Gastrocnemius medialis (tissue), 4 donors: ENCODE measurements at regions of chr3 and their contacts with region 1.

Region 1: DNA sequence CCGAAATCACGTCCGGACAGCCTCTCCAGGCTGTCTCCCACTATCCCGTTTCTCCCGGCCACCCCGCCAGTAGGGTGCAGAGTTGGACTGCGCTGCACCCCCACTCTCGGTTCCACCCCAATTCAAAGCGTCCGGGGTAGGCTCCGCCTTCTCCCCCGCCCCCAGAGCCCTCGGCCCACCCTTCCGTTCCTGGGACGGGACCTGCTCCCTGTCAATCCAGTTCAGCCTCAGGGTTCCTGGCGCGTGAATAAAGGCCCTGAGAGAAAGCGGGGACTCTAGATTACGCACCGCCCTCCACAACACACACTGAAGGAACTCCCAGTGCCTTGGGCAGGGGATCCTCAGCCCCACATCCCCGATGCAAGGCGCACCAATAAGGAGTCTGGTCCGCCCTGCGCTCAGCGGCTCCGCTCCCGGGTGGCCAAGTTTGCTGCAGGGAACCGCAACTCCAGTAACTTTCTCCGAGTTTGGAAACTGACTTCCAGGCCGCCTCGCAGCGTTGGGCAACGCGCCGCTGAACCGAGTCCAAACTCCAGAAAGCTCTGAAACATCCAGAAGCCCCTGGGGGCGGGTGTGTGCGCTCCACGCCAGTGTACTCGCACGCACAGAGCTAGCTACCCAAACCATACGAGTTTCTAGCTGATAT is 1.9 kb downstream of the ADAMTS9 start:
- DNase-seq: peak; percentile 84 to 92
- ATAC-seq: peak; percentile 76 to 78
- H3K4me3 ChIP-seq: peak overlapping the region; percentile 56 to 95 (median 88)
- H3K27ac ChIP-seq: peak overlapping the region; percentile 90 to 97 (median 93)
- H3K4me1 ChIP-seq: peaks cover 0 to 15% of the 10 kb centered on the region in 2 donors
- H3K27me3 ChIP-seq: no peaks in the 10 kb centered on the region
- CTCF ChIP-seq: peak in 3 of 5 experiments; percentile 49 to 62 (median 52)
- POLR2A ChIP-seq: peak; percentile 80 to 91

Region 2: DNA sequence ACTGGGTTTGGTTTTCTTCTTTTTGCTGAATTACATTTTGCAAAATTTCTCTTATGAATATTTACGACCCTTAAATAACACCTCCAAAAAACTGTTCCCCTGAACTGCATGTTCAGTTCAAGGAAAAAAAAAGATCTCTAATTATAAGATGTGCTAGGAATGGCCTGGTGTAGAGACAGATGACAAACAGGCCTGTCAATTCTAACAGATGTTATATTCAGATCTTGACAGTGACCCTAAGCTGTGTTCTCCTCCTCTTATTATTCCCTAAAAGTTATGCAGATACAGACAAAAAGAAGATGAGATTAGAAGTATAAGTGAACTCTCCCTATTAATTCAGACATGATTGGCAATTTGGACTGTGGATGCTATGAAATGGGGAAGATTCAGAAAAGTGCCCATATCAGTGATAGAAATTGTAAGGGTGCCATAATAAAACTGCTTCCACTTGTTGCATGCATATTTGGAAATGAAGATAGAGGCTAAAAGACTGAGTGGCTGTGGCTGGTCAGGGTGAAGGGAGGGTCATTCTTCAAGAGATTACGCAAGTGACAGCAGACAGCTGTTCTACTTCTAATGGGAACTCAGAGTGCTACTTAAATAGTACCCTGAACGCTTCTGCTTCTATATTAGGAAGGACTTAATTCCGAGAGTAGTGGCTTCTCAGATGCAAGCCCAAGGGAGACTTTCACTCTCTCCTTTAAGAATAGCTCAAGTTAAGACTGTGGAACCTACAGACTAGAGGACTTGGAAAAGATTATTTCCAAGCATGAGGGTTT is 73.7 kb before region 1 on chr3:
- in situ Hi-C with region 1: no loop called
- intact Hi-C with region 1: loop called (anchors 2 kb)
- DNase-seq: peak; percentile 75 to 76
- ATAC-seq: peak; percentile 98 to 99
- H3K4me3 ChIP-seq: peak overlapping the region; percentile 33 to 41 (median 35)
- H3K27ac ChIP-seq: peak overlapping the region; percentile 82 to 92 (median 88)
- H3K4me1 ChIP-seq: peaks cover 51 to 68% of the 10 kb centered on the region in 2 donors
- H3K27me3 ChIP-seq: no peaks in the 10 kb centered on the region
- CTCF ChIP-seq: no peak
- POLR2A ChIP-seq: peak; percentile 12 to 56

Region 3: GRCh38 chr3:64763980-64764379 is 78.1 kb after region 1 on chr3:
- in situ Hi-C with region 1: no loop called
- intact Hi-C with region 1: loop called (anchors 5 kb)
- DNase-seq: no peak
- ATAC-seq: no peak
- H3K4me3 ChIP-seq: no peak overlapping the region
- H3K27ac ChIP-seq: peak overlapping the region in 1 of 4 donors; percentile 31
- H3K4me1 ChIP-seq: peaks cover 19 to 25% of the 10 kb centered on the region in 2 donors
- H3K27me3 ChIP-seq: no peaks in the 10 kb centered on the region
- CTCF ChIP-seq: peak in 1 of 5 experiments; percentile 16
- POLR2A ChIP-seq: no peak

Region 4: GRCh38 chr3:64903006-64903405 is 217.1 kb after region 1 on chr3:
- in situ Hi-C with region 1: no loop called
- intact Hi-C with region 1: loop called (anchors 5 kb)
- DNase-seq: no peak
- ATAC-seq: no peak
- H3K4me3 ChIP-seq: no peak overlapping the region
- H3K27ac ChIP-seq: peak overlapping the region in 2 of 4 donors; percentile 29 to 72
- H3K4me1 ChIP-seq: peaks cover 32 to 37% of the 10 kb centered on the region in 2 donors
- H3K27me3 ChIP-seq: no peaks in the 10 kb centered on the region
- CTCF ChIP-seq: no peak
- POLR2A ChIP-seq: no peak

Region 5: DNA sequence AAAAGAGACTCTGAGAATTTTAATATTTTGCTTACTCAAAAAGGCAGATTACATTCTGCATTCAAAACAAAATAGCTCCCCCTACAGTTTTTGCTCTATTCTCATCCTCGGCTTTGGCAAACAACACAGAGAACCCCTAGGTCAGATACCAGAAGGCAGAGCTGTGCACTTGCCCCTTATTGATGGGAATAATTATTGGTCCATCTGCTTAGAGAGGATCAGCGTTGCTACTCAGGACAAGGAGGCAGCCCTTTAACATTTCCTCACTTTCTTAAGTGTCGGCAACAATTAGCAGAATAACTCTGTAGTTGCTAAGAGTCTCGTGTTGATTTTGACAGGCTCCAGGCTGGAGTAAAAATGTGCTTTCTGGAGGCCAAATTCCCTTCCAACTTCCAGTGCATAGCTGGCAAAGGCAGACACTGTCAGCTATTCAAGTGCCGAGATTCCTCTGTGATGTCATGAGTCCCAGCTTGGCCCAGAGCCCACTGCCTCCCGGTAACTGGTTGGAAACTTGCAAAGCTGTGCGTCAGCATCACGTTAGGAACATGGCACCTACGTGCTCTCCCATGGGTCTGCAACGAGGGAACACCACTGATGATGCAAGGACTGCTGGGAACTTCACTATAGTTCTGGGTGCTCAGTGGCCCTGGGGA is 484.6 kb after region 1 on chr3:
- in situ Hi-C with region 1: no loop called
- intact Hi-C with region 1: loop called (anchors 1 kb)
- DNase-seq: peak; percentile 41 to 71
- ATAC-seq: peak; percentile 73 to 85
- H3K4me3 ChIP-seq: no peak overlapping the region
- H3K27ac ChIP-seq: peak overlapping the region; percentile 51 to 74 (median 62)
- H3K4me1 ChIP-seq: peaks cover 3 to 4% of the 10 kb centered on the region in 2 donors
- H3K27me3 ChIP-seq: no peaks in the 10 kb centered on the region
- CTCF ChIP-seq: peak in 2 of 5 experiments; percentile 28 to 34
- POLR2A ChIP-seq: peak in 1 of 2 donors; percentile 8

Region 6: GRCh38 chr3:66220602-66221377 is 1534.9 kb after region 1 on chr3 and contains the start of gene SLC25A26:
- in situ Hi-C with region 1: no loop called
- intact Hi-C with region 1: loop called (anchors 10 kb)
- DNase-seq: peak; percentile 96 to 97
- ATAC-seq: peak; percentile 98
- H3K4me3 ChIP-seq: peak within 1 kb of the TSS; percentile 73 to 89 (median 84)
- H3K27ac ChIP-seq: peak within 1 kb of the TSS; percentile 84 to 91 (median 89)
- H3K4me1 ChIP-seq: peaks cover 12 to 13% of the 10 kb centered on the region in 2 donors
- H3K27me3 ChIP-seq: no peaks in the 10 kb centered on the region
- CTCF ChIP-seq: no peak
- POLR2A ChIP-seq: peak; percentile 63 to 64
- total RNA-seq, gene SLC25A26: 24.1 to 44.3 (median 32.4) TPM